Upper lobe of right lung (tissue), 1 donor: ENCODE measurements at regions of chr17 and their contacts with region 1.

Region 1: DNA sequence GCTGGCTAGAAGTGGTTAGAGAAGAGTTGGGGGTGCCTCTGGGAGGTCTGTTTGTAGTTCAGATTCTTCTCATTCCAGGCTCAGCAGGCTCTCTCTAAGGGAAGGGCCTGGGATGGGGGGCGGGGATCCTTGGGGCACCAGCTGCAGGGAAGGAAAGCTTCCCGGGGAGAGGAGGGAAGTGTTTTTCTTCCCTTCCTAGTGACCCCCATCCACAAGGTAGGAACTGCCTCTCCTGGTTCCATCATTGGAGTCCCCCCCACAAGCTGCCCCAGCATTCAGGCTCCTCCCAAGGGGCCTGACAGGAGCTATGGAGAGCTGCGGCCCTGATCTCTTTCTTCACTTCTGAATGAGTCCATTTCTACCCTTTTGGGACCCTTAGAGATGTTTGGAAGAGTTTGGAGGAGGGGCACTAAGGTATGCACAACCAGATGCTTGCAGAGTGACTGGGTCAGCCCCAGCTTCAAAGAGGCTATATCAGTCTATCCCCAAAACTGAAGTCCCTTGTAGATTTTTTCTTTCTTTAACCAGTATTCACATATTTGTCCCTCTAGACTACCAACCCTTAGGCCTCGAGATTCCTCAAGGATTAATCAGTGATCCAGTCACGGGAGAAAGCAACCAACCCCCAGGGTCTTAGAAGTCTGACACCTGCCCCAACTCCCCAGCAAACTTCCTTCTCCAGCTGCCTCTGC is 13.9 kb upstream of the FZD2 start:
- DNase-seq: no peak
- ATAC-seq: peak; percentile 81
- H3K4me3 ChIP-seq: no peak overlapping the region
- H3K27ac ChIP-seq: peak overlapping the region; percentile 24
- H3K4me1 ChIP-seq: peaks cover 8% of the 10 kb centered on the region
- H3K27me3 ChIP-seq: no peaks in the 10 kb centered on the region
- CTCF ChIP-seq: no peak

Region 2: DNA sequence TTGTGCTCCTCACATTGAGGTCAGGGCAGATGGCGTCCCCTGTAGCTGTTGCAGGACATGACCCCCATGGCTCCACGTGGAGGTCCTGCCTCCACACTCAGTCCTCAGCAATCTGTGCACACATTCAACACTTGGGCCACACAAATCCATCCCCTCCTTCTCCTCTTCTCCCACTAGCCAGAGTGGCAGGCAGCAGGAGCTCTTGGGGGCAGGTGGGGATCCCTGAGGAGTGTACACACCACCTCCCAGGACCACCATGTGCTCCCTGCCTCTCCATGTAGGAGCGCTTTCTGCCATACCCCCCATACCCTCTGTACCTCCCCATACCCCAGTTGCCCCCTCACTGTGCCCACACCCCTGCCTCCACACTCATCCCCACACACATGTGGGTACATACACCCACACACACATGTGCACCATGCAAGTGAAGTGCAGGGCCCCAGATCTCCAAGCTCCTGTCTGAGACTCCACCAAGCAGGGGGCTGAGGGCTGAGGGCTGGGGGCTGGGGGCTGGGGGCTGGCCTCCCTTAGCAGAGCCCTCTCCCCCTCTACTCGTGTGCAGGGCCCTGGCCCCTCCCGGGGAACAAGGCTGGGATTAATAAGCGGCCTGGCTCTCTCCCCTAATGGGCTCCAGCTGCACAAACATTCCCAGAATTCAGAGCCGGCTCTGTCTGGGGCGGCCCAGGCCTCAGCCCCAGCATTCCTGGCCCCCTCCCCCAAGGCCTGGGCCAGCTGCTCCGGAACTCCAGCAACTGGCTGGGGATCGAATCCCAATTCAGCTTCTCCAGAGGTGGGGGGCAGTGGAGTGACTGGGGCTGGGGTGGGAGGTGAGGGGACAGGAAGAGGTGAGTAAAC is 64.7 kb after region 1 on chr17:
- intact Hi-C with region 1: no loop called
- DNase-seq: no peak
- ATAC-seq: no peak
- H3K4me3 ChIP-seq: no peak overlapping the region
- H3K27ac ChIP-seq: no peak overlapping the region
- H3K4me1 ChIP-seq: no peaks in the 10 kb centered on the region
- H3K27me3 ChIP-seq: no peaks in the 10 kb centered on the region
- CTCF ChIP-seq: no peak

Region 3: DNA sequence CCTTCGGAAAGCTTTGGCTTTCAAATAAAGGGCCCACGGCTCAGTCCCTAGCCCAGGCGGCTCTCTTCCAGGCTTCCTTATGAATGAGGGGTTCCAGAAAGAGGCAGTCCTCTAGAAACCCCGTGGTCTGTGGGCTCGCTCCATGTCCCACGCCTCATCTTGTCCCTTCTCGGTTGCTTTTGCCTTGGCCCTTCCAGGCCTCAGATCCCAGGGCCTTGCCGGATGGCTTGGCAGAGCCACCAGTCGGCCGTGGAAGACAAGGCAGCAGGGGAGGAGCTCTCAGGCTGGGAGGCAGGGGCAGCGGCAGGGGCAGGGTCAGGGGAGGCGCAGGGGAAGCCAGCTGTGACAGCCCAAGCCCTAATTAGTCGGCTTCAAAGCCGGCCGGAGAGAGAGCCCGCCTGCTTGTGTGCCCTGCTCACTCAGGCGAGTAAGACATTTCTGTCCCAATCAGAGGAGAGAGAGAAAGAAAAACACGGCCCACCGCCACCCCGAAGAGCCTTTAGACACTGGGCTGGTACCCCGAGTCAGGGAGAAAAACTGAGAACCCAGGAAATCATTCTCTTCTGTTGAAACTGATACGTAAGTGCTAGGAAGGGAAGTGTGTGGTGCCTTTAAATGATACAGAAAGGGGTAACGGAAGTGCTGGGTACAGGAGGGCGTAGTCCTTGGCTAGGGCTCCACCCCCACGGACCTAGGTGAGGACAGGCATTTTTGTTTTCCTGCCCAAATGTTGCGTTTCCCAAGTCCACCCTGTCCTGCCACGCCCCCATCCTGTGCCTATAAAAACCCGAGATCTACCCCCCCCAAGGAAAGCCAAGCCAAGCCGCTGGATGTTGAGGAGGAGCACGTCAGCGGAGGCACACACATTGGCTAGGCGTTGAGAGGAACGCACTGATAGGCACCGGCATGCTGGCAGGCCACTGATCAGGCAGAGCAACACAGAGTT is 85.2 kb after region 1 on chr17:
- intact Hi-C with region 1: loop called (anchors 10 kb)
- DNase-seq: no peak
- ATAC-seq: peak; percentile 80
- H3K4me3 ChIP-seq: peak overlapping the region; percentile 30
- H3K27ac ChIP-seq: no peak overlapping the region
- H3K4me1 ChIP-seq: no peaks in the 10 kb centered on the region
- H3K27me3 ChIP-seq: no peaks in the 10 kb centered on the region
- CTCF ChIP-seq: no peak